ENCODE measurements at regions of chr5 and their contacts with region 1.

Region 1: DNA sequence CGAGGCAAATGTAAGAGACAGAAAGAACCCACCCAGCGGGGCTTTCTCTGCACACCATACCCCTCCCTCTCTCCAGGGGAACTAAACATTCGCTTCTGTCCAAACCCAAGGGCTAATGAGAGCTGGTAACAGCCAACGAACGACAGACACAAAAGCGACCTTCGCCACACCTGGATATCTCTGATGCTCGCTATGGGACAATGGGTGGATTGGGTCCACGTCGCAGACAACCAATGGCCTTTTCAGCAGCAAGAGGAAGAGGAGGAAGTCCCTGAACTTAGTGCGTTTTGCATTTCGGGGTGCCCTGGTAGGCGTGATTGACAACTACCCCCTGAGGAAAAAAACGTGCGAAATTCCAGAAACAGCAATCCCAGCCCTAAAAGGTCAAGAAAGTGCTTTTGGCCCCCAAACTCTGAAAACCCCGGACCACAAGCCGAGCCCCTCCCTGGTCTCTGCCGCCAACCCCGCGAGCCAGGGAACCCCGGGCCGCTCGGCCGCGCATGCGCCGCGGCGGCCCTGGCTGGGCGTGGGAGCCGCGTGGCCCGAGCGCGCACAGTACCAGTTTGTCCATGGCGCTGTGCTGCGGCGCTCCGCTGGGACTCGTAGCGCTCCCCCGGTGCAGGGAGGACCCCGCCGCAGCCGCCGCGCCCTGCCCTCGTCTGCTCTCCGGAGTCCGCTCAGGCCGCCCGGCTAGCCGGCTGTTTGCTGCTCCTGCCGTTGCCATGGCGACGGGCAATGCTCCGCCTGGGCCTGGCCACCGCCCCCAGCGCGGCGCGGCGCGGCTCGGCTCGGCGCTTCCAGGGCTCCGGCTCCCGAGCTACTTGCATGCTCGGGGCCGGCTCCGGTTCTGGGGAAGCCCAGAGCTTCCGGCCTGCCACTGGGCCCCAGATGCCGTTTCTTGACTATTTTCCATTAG is 66.9 kb upstream of the DNAH5 start:
- DNase-seq: peak; percentile 84
- H3K4me3 ChIP-seq: peak overlapping the region; percentile 14 to 54 (median 43)
- H3K27ac ChIP-seq: peak overlapping the region; percentile 51 to 74 (median 65)
- H3K4me1 ChIP-seq: peaks cover 0 to 20% (median 11%) of the 10 kb centered on the region in 4 donors
- H3K27me3 ChIP-seq: no peaks in the 10 kb centered on the region
- CTCF ChIP-seq: no peak
- EP300 ChIP-seq: no peak
- POLR2A ChIP-seq: no peak

Region 2: GRCh38 chr5:14286574-14287421 is 275.5 kb after region 1 on chr5:
- in situ Hi-C with region 1: loop called in 1 of 4 experiments (anchors 25 kb)
- intact Hi-C with region 1: no loop called
- DNase-seq: no peak
- H3K4me3 ChIP-seq: no peak overlapping the region
- H3K27ac ChIP-seq: no peak overlapping the region
- H3K4me1 ChIP-seq: peaks cover 0 to 6% (median under 1%) of the 10 kb centered on the region in 4 donors
- H3K27me3 ChIP-seq: no peaks in the 10 kb centered on the region
- CTCF ChIP-seq: no peak
- EP300 ChIP-seq: no peak
- POLR2A ChIP-seq: no peak

Measured in transverse colon (tissue), 4 donors.